Activated naive CD8-positive, alpha-beta T cell treated with anti-CD3 and anti-CD28 coated beads, Interleukin-2, amount 10 ng/mL, durations not matched to agents 7 days and 5 days (primary cell): ENCODE measurements at regions of chr16 and their contacts with region 1.

Region 1: GRCh38 chr16:31186176-31186575 is 6.2 kb downstream of the FUS start:
- DNase-seq: no peak
- ATAC-seq: peak; percentile 15
- H3K4me3 Mint-ChIP-seq: peak overlapping the region; percentile 62
- H3K27ac Mint-ChIP-seq: peak overlapping the region; percentile 74
- H3K4me1 Mint-ChIP-seq: peaks cover 74% of the 10 kb centered on the region
- H3K27me3 Mint-ChIP-seq: no peaks in the 10 kb centered on the region

Region 2: GRCh38 chr16:31196324-31197088 is 10.3 kb after region 1 on chr16:
- POLR2A ChIA-PET with region 1: interaction called, 30 read pairs
- DNase-seq: no peak
- ATAC-seq: no peak
- H3K4me3 Mint-ChIP-seq: no peak overlapping the region
- H3K27ac Mint-ChIP-seq: peak overlapping the region; percentile 45
- H3K4me1 Mint-ChIP-seq: peaks cover 59% of the 10 kb centered on the region
- H3K27me3 Mint-ChIP-seq: no peaks in the 10 kb centered on the region

Region 3: DNA sequence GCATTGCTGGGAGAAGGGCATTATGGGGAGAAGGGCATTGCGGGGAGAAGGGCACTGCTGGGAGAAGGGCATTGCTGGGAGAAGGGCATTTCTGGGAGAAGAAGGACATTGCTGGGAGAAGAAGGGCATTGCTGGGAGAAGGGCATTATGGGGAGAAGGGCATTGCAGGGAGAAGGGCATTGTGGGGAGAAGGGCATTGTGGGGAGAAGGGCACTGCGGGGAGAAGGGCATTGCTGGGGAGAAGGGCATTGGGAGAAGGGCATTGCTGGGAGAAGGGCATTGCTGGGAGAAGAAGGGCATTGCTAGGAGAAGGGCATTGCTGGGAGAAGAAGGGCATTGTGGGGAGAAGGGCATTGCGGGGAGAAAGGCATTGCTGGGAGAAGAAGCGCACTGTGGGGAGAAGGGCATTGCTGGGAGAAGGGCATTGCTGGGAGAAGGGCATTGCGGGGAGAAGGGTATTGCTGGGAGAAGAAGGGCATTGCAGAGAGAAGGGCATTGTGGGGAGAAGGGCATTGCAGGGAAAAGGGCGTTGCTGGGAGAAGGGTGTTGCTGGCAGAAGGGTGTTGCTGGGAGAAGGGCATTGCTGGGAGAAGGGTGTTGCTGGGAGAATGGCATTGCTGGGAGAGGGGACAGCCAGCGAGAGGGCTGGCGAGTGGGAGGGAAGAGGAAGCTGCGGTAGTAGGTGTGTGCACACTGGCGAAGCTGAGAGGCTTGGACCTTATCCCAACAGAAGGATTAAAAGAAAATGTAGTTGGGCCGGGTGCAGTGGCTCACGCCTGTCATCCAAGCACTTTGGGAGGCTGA is 35.4 kb after region 1 on chr16:
- POLR2A ChIA-PET with region 1: no interaction called
- DNase-seq: no peak
- ATAC-seq: no peak
- H3K4me3 Mint-ChIP-seq: no peak overlapping the region
- H3K27ac Mint-ChIP-seq: no peak overlapping the region
- H3K4me1 Mint-ChIP-seq: no peaks in the 10 kb centered on the region
- H3K27me3 Mint-ChIP-seq: peaks cover 36% of the 10 kb centered on the region